Naive thymus-derived CD4-positive, alpha-beta T cell (primary cell): ENCODE measurements at regions of chr12 and their contacts with region 1.

Region 1: DNA sequence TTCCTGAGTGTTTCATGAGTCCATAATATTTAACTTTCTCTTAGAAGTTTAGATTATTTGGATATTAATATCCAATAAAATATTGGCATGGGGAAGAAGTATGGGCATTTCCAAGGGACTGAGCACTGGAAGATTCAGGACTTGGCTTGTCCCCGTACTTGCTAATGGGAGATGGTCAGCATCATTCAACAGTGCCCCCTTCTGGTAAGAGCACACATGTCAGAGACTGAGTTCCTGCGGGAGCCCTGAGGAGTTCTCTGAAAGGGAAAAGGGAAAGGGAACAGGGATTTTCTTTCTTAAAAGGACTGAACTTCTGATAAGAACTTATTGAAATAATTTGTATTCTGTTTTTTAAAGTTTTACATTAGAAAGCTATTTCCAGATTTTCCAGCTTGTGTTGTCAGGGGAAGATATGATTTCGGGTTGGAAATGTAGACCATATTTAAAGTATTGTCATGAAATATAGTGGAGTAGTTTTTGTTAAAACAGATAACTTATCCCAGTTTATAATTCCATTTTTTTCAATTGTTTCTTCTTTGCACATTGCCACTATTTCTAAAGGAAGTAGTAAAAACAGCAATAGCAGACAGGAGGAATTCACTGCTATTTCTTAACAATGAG is 59.8 kb upstream of the C12orf71 start:
- DNase-seq: peak in 7 of 9 donors; percentile 7 to 32 (median 15)
- ATAC-seq: peak; percentile 80
- H3K4me3 ChIP-seq: no peak overlapping the region
- H3K4me3 Mint-ChIP-seq: no peak overlapping the region
- H3K27ac ChIP-seq: no peak overlapping the region
- H3K27ac Mint-ChIP-seq: no peak overlapping the region
- H3K4me1 ChIP-seq: no peaks in the 10 kb centered on the region
- H3K4me1 Mint-ChIP-seq: peaks cover 1 to 30% (median 11%) of the 10 kb centered on the region in 7 donors
- H3K27me3 ChIP-seq: no peaks in the 10 kb centered on the region
- H3K27me3 Mint-ChIP-seq: peaks cover 0 to 5% (median 0%) of the 10 kb centered on the region in 5 donors

Region 2: DNA sequence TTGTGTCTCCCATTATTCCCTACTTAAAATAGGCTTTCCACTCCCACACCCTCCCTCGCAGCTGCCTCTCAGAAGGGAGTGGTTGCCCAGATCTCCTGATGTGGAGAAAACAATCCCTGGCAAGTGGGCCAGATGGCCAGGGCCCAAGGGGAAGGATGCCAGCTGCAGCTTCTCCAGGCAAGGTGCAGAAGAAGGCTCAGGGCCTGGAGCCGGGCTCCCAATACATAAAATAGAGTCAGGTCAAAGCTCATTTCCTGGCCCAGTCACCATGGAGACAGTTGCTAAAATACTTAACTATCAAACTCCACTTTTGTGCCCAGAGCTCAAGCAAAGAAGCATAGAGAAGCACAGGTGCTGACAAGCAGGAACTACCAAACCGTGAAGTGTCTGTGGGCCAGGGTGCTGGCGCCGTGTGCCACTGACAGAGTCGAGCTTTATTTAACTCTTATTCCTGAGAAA is 263.5 kb before region 1 on chr12:
- CTCF ChIA-PET with region 1: no interaction called
- POLR2A ChIA-PET with region 1: no interaction called
- intact Hi-C with region 1: no loop called
- DNase-seq: no peak
- ATAC-seq: no peak
- H3K4me3 ChIP-seq: no peak overlapping the region
- H3K4me3 Mint-ChIP-seq: no peak overlapping the region
- H3K27ac ChIP-seq: no peak overlapping the region
- H3K27ac Mint-ChIP-seq: peak overlapping the region in 1 of 9 donors; percentile 32
- H3K4me1 ChIP-seq: no peaks in the 10 kb centered on the region
- H3K4me1 Mint-ChIP-seq: peaks cover 0 to 3% (median 0%) of the 10 kb centered on the region in 7 donors
- H3K27me3 ChIP-seq: no peaks in the 10 kb centered on the region
- H3K27me3 Mint-ChIP-seq: peaks cover 0 to 26% (median 6%) of the 10 kb centered on the region in 5 donors

Region 3: GRCh38 chr12:27048822-27049752 is 93.1 kb before region 1 on chr12:
- CTCF ChIA-PET with region 1: no interaction called
- POLR2A ChIA-PET with region 1: no interaction called
- intact Hi-C with region 1: loop called in 1 of 2 experiments (anchors 5 kb)
- DNase-seq: no peak
- ATAC-seq: no peak
- H3K4me3 ChIP-seq: no peak overlapping the region
- H3K4me3 Mint-ChIP-seq: no peak overlapping the region
- H3K27ac ChIP-seq: no peak overlapping the region
- H3K27ac Mint-ChIP-seq: no peak overlapping the region
- H3K4me1 ChIP-seq: no peaks in the 10 kb centered on the region
- H3K4me1 Mint-ChIP-seq: no peaks in the 10 kb centered on the region
- H3K27me3 ChIP-seq: no peaks in the 10 kb centered on the region
- H3K27me3 Mint-ChIP-seq: peaks cover 0 to 1% (median 0%) of the 10 kb centered on the region in 5 donors

Region 4: GRCh38 chr12:27207615-27208413 is 65.6 kb after region 1 on chr12:
- CTCF ChIA-PET with region 1: no interaction called
- POLR2A ChIA-PET with region 1: no interaction called
- intact Hi-C with region 1: loop called in 1 of 2 experiments (anchors 2 kb)
- DNase-seq: peak in 1 of 9 donors; percentile 40
- ATAC-seq: no peak
- H3K4me3 ChIP-seq: no peak overlapping the region
- H3K4me3 Mint-ChIP-seq: no peak overlapping the region
- H3K27ac ChIP-seq: no peak overlapping the region
- H3K27ac Mint-ChIP-seq: no peak overlapping the region
- H3K4me1 ChIP-seq: no peaks in the 10 kb centered on the region
- H3K4me1 Mint-ChIP-seq: peaks cover 0 to 23% (median 0%) of the 10 kb centered on the region in 7 donors
- H3K27me3 ChIP-seq: no peaks in the 10 kb centered on the region
- H3K27me3 Mint-ChIP-seq: no peaks in the 10 kb centered on the region

Region 5: GRCh38 chr12:27474344-27474743 is 332.1 kb after region 1 on chr12:
- CTCF ChIA-PET with region 1: no interaction called
- POLR2A ChIA-PET with region 1: no interaction called
- intact Hi-C with region 1: no loop called
- DNase-seq: no peak
- ATAC-seq: no peak
- H3K4me3 ChIP-seq: no peak overlapping the region
- H3K4me3 Mint-ChIP-seq: no peak overlapping the region
- H3K27ac ChIP-seq: no peak overlapping the region
- H3K27ac Mint-ChIP-seq: no peak overlapping the region
- H3K4me1 ChIP-seq: peaks cover 0 to under 1% of the 10 kb centered on the region in 2 donors
- H3K4me1 Mint-ChIP-seq: peaks cover 7 to 29% (median 20%) of the 10 kb centered on the region in 7 donors
- H3K27me3 ChIP-seq: no peaks in the 10 kb centered on the region
- H3K27me3 Mint-ChIP-seq: no peaks in the 10 kb centered on the region